MCF 10A (cell line): ENCODE measurements at regions of chr11 and their contacts with region 1.

Region 1: GRCh38 chr11:18243783-18244362 is 4.6 kb downstream of the SAA2 start:
- DNase-seq: peak; percentile 86
- H3K4me3 Mint-ChIP-seq: no peak overlapping the region
- H3K27ac Mint-ChIP-seq: no peak overlapping the region
- H3K4me1 Mint-ChIP-seq: peaks cover 24% of the 10 kb centered on the region
- H3K27me3 Mint-ChIP-seq: peaks cover 10% of the 10 kb centered on the region
- CTCF ChIP-seq: peak; percentile 94

Region 2: GRCh38 chr11:18294862-18295261 is 51.0 kb after region 1 on chr11:
- CTCF ChIA-PET with region 1: interaction called, 12 read pairs
- POLR2A ChIA-PET with region 1: no interaction called
- intact Hi-C with region 1: no loop called
- DNase-seq: no peak
- H3K4me3 Mint-ChIP-seq: no peak overlapping the region
- H3K27ac Mint-ChIP-seq: no peak overlapping the region
- H3K4me1 Mint-ChIP-seq: no peaks in the 10 kb centered on the region
- H3K27me3 Mint-ChIP-seq: no peaks in the 10 kb centered on the region
- CTCF ChIP-seq: no peak

Region 3: GRCh38 chr11:18321980-18322711 is 78.3 kb after region 1 on chr11 and contains the starts of genes GTF2H1 and HPS5:
- CTCF ChIA-PET with region 1: interaction called, 6 read pairs
- POLR2A ChIA-PET with region 1: interaction called, 9 read pairs
- intact Hi-C with region 1: loop called (anchors 2 kb)
- DNase-seq: peak; percentile 99
- H3K4me3 Mint-ChIP-seq: peak within 1 kb of the TSS; percentile 92
- H3K27ac Mint-ChIP-seq: peak within 1 kb of the TSS; percentile 100
- H3K4me1 Mint-ChIP-seq: peaks cover 57% of the 10 kb centered on the region
- H3K27me3 Mint-ChIP-seq: no peaks in the 10 kb centered on the region
- CTCF ChIP-seq: no peak
- total RNA-seq, gene GTF2H1: 60.9 and 83.4 TPM in 2 replicates
- total RNA-seq, gene HPS5: 23.6 and 31.8 TPM in 2 replicates

Region 4: GRCh38 chr11:18492888-18493287 is 249.0 kb after region 1 on chr11:
- CTCF ChIA-PET with region 1: interaction called, 3 read pairs
- POLR2A ChIA-PET with region 1: no interaction called
- intact Hi-C with region 1: loop called (anchors 10 kb)
- DNase-seq: peak; percentile 19
- H3K4me3 Mint-ChIP-seq: no peak overlapping the region
- H3K27ac Mint-ChIP-seq: no peak overlapping the region
- H3K4me1 Mint-ChIP-seq: no peaks in the 10 kb centered on the region
- H3K27me3 Mint-ChIP-seq: no peaks in the 10 kb centered on the region
- CTCF ChIP-seq: no peak

Region 5: DNA sequence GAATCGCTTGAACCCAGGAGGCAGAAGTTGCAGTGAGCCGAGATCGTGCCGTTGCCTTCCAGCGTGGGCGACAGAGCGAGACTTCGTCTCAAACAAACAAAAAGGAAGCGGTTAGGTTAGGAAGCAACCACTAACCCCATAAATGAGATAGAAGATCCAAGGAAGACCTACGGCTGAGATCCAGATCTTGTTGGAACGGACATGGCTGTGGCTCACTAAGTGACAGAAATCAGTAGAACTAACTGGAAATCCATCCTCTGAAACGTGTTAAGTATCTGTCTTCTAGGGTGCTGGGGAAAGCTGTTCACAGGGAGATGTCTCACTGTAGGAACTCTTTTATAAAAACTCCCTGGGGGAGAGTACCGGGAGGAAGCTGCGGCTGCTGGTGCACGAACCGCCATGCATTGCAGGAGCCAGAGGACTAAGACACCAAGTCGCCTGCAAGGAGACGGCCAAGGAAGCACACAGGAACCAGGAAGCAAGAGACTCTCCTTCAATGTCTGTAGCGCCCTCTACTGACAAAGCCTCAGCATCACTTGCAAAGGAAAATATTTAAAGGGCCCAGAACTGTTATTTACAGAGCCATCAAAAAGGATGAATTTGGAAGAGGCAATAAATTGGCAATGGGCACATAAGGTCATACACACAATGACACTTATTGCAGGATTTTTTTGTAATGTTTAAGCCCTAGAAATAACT is 407.1 kb after region 1 on chr11:
- CTCF ChIA-PET with region 1: interaction called, 3 read pairs
- POLR2A ChIA-PET with region 1: no interaction called
- intact Hi-C with region 1: loop called (anchors 5 kb)
- DNase-seq: peak; percentile 71
- H3K4me3 Mint-ChIP-seq: no peak overlapping the region
- H3K27ac Mint-ChIP-seq: no peak overlapping the region
- H3K4me1 Mint-ChIP-seq: no peaks in the 10 kb centered on the region
- H3K27me3 Mint-ChIP-seq: no peaks in the 10 kb centered on the region
- CTCF ChIP-seq: peak; percentile 40